Left cardiac atrium (tissue), 4 donors: ENCODE measurements at regions of chr3 and their contacts with region 1.

Region 1: DNA sequence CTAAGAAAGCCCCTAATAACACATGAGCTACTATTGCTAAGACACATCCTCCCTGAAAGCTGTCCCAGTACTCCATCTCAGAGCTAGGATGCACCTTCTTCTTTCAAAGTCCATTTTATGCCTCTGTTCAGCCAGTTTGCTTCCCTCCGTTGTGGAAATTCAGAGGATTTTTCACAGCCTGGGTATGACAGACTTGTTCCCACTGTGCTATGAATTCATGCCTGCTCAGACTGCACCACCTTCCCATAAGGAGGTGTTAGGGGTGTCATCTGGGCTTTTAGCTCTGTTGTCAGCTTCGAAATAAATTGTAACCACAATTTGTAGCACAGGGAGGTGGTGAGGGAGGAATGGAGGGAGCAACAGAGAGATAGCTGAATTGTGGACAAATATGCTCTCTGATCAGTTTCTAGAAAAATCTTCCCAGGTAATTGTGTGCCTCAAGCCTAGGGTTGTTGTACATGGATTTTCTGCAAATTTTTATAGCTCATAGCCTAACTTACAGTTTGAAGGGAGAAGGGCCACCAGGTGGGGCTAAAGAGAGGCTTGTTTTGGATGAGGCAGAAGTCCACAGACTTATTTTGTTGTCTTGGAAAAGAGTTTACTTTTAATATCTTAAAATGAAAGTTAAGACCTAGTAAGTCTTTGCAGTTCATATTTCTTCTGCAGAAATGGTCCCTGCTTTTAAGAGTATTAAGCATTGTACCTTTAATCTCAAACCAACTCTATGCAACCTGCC is 462.0 kb downstream of the PDCD6IP start:
- DNase-seq: peak; percentile 56
- ATAC-seq: peak; percentile 56 to 68

Region 2: DNA sequence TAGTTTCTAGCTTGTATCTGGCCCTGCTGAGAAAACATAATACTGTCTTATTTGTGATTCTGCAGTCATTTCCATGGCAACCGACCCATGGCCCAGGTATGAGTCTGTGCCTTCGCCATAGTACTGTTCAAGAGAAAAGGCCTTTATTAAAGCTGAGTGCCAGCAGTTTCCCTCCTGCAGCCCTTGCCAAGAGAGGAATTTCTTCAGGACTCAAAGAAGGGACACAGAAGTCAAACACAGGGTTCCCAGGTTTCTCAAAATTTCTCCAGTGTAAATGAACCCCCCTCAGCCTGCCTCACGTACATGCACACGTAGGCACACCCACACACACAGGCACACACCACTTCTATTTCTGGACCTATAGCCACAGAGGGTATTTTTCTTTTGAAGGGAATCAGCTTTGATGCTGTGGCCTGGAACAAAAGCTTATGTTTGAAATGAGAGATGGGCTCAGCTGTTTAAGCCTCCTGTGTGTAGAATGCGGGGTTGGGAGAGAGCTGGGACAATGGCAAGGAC is 192.8 kb before region 1 on chr3:
- intact Hi-C with region 1: no loop called
- DNase-seq: no peak
- ATAC-seq: no peak

Region 3: DNA sequence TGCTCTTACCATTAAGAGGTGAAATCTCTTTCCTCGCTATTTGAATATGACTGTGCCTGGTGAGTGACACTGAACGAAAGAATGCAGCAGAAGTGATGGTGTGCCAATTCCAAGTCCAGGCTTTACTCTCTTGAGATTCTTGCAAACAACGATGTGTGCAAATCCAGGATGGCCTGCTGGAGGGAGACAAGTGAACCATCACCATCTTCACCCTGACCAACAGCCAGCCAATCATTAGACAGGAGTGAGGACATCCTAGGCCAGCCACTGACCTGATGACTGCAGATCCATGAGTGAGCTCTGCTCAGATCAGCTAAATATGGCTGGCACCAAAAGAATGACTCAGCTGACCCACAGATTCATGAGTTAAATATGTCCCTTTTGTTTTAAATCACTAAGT is 416.0 kb after region 1 on chr3:
- intact Hi-C with region 1: loop called (anchors 5 to 10 kb)
- DNase-seq: no peak
- ATAC-seq: peak; percentile 23 to 84